Ovary (tissue), 10 donors: ENCODE measurements at regions of chr18 and their contacts with region 1.

Region 1: DNA sequence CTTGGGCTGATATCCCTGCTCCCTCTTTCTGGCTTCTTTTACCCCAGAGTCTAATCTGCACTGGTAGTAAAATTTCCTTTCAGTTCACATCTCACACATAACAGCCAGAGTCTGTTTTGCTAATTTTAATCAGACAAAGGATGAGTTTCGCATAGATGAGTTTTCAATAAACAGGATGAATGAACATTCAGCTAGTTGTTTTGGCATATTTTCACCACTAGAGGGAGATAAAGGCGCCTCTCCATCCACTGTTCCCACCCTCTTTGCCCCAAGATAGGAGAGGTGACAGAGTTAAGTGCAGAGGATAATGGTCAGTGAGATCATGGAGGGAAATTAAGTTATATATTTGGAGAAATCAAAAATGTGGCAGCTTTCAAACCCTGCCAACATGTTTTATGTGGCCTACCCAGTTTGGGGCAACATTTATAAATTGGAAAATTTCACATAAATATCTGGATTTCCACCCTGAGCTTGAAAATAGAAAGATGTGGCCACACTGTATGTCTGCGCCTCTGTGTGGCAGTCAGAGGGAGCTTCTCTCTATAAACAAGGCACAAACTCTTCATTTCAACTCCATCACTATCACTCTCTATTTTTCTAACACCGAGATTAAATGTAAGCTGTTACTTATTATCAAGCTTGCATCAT is 48.5 kb upstream of the DTNA start:
- DNase-seq: no peak
- H3K4me3 ChIP-seq: no peak overlapping the region
- H3K27ac ChIP-seq: no peak overlapping the region
- H3K4me1 ChIP-seq: peaks cover 3% of the 10 kb centered on the region
- H3K27me3 ChIP-seq: no peaks in the 10 kb centered on the region
- CTCF ChIP-seq: peak; percentile 29 to 57 (median 37)
- EP300 ChIP-seq: no peak
- POLR2A ChIP-seq: no peak

Region 2: DNA sequence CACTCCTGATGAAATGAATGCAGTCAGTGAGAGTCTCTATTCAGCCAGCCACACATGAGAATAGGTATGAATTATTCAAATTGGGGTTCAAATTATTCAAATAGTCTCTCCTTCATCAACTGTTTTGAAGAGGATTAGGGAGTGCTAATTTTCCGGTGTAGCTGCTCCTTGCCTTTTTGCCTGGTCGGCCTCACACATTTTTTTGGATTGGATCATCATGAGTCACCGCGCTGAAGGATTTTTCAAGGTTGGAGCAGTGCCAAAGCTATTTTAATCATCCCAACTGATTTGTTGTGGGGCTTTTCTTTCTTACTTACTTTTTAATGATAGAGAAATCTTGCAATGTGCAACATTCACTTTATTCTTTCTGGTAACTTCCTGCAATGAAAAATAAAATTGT is 46.1 kb after region 1 on chr18:
- intact Hi-C with region 1: loop called in 1 of 4 experiments (anchors 10 kb)
- DNase-seq: peak; percentile 53 to 83 (median 60)
- H3K4me3 ChIP-seq: no peak overlapping the region
- H3K27ac ChIP-seq: peak overlapping the region in 1 of 2 donors; percentile 21
- H3K4me1 ChIP-seq: peaks cover 6% of the 10 kb centered on the region
- H3K27me3 ChIP-seq: no peaks in the 10 kb centered on the region
- CTCF ChIP-seq: no peak
- EP300 ChIP-seq: no peak
- POLR2A ChIP-seq: no peak